ENCODE measurements at regions of chr13 and their contacts with region 1.

Region 1: DNA sequence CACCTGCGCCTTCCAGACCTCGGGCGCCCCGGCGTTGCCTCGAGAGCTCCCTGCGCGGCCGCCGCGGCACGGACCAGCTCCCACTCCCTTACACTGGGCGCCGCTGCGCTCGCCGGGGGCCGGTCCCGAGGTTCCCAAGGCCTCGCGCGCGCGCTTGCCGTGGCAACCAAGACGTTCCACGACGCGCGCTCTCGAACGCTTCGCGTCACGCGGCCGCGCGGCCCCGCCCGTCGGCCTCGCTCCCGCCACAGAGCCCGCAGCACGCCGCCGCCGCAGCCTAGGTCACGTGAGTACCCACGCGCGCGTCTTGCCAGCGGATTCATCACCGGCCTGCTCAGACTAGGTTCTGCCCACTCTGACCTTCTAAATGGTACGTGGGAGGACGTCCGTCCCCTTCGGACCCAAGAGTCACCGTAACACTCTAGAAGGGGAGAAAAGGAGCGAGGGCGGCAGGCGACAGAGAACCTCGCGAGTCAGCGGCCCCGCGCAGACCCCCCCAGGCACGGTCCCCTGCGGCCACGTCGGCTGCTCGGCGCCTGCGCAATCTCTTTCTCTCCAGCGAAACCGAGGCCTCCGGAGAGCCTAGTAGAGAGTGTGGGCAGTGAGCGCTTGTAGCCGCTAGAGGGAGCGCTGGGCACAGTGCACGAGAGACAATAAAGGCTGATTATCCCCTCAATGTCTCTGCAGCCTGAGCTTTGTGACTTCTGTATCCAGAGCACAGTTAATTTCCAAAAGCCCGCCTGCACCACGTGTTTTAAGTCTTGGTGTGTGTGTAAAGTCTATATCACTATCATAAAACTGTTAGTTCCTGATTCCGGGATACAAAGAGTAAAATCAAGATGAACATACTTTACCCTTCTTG is at the start of gene SPART:
- DNase-seq: peak; percentile 79 to 95 (median 90)
- ATAC-seq: peak; percentile 89
- H3K4me3 ChIP-seq: peak within 1 kb of the TSS; percentile 89
- H3K4me3 Mint-ChIP-seq: peak within 1 kb of the TSS; percentile 83 to 99 (median 96)
- H3K27ac ChIP-seq: peak within 1 kb of the TSS; percentile 81
- H3K27ac Mint-ChIP-seq: peak within 1 kb of the TSS; percentile 91 to 99 (median 97)
- H3K4me1 ChIP-seq: peaks cover 4 to 14% of the 10 kb centered on the region in 2 donors
- H3K4me1 Mint-ChIP-seq: peaks cover 24 to 42% (median 38%) of the 10 kb centered on the region in 7 donors
- H3K27me3 ChIP-seq: no peaks in the 10 kb centered on the region
- H3K27me3 Mint-ChIP-seq: peaks cover 0 to 5% (median 0%) of the 10 kb centered on the region in 5 donors
- total RNA-seq, gene SPART: 24.8 to 67.5 (median 26.9) TPM

Region 2: DNA sequence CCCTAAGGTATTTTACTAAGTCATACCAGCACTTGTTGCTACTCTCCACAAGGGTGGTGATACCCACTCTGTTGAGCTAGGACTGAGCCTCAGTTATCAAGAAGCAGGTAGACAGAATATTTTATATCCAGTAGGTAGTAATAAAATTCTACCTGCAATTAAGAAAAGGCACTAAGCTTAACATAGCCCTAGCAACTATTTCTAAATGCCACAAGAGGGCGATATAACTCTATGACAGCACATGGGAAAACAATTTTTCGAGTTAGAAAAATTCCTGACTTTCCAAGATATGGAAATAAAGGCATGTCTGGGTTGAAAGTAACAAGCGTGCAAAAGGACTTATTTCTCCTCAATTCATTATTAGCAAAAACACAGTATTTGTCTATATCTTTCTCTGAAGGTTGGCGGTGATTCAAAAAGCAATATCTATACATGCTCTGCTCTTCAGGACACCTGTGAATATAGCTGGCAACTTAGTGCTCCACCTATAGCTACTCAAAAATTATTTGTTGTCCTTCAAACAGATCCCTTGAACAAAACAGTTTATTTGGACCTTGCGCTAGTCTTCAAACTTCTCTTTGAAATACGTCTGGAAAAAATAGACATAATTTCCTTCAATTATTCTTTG is 63.5 kb before region 1 on chr13:
- CTCF ChIA-PET with region 1: interaction called, 4 read pairs
- POLR2A ChIA-PET with region 1: no interaction called
- intact Hi-C with region 1: loop called in 1 of 2 experiments (anchors 5 kb)
- DNase-seq: peak in 4 of 9 donors; percentile 4 to 18 (median 10)
- ATAC-seq: peak; percentile 52
- H3K4me3 ChIP-seq: no peak overlapping the region
- H3K4me3 Mint-ChIP-seq: no peak overlapping the region
- H3K27ac ChIP-seq: no peak overlapping the region
- H3K27ac Mint-ChIP-seq: no peak overlapping the region
- H3K4me1 ChIP-seq: no peaks in the 10 kb centered on the region
- H3K4me1 Mint-ChIP-seq: no peaks in the 10 kb centered on the region
- H3K27me3 ChIP-seq: peaks cover 0 to 5% of the 10 kb centered on the region in 2 donors
- H3K27me3 Mint-ChIP-seq: peaks cover 6 to 41% (median 32%) of the 10 kb centered on the region in 5 donors

Region 3: GRCh38 chr13:36332986-36333385 is 13.5 kb before region 1 on chr13:
- CTCF ChIA-PET with region 1: interaction called, 3 read pairs
- POLR2A ChIA-PET with region 1: interaction called, 3 read pairs
- intact Hi-C with region 1: loop called in 1 of 2 experiments (anchors 1 kb)
- DNase-seq: no peak
- ATAC-seq: no peak
- H3K4me3 ChIP-seq: no peak overlapping the region
- H3K4me3 Mint-ChIP-seq: no peak overlapping the region
- H3K27ac ChIP-seq: no peak overlapping the region
- H3K27ac Mint-ChIP-seq: no peak overlapping the region
- H3K4me1 ChIP-seq: no peaks in the 10 kb centered on the region
- H3K4me1 Mint-ChIP-seq: peaks cover 23 to 57% (median 40%) of the 10 kb centered on the region in 7 donors
- H3K27me3 ChIP-seq: no peaks in the 10 kb centered on the region
- H3K27me3 Mint-ChIP-seq: no peaks in the 10 kb centered on the region

Region 4: GRCh38 chr13:36420437-36420891 is 74.0 kb after region 1 on chr13:
- CTCF ChIA-PET with region 1: no interaction called
- POLR2A ChIA-PET with region 1: no interaction called
- intact Hi-C with region 1: loop called (anchors 1 kb)
- DNase-seq: peak in 8 of 9 donors; percentile 15 to 69 (median 52)
- ATAC-seq: peak; percentile 85
- H3K4me3 ChIP-seq: no peak overlapping the region
- H3K4me3 Mint-ChIP-seq: peak overlapping the region in 1 of 10 donors; percentile 51
- H3K27ac ChIP-seq: no peak overlapping the region
- H3K27ac Mint-ChIP-seq: peak overlapping the region in 1 of 9 donors; percentile 54
- H3K4me1 ChIP-seq: no peaks in the 10 kb centered on the region
- H3K4me1 Mint-ChIP-seq: peaks cover 0 to 41% (median 0%) of the 10 kb centered on the region in 7 donors
- H3K27me3 ChIP-seq: no peaks in the 10 kb centered on the region
- H3K27me3 Mint-ChIP-seq: peaks cover 16 to 71% (median 61%) of the 10 kb centered on the region in 5 donors

Region 5: DNA sequence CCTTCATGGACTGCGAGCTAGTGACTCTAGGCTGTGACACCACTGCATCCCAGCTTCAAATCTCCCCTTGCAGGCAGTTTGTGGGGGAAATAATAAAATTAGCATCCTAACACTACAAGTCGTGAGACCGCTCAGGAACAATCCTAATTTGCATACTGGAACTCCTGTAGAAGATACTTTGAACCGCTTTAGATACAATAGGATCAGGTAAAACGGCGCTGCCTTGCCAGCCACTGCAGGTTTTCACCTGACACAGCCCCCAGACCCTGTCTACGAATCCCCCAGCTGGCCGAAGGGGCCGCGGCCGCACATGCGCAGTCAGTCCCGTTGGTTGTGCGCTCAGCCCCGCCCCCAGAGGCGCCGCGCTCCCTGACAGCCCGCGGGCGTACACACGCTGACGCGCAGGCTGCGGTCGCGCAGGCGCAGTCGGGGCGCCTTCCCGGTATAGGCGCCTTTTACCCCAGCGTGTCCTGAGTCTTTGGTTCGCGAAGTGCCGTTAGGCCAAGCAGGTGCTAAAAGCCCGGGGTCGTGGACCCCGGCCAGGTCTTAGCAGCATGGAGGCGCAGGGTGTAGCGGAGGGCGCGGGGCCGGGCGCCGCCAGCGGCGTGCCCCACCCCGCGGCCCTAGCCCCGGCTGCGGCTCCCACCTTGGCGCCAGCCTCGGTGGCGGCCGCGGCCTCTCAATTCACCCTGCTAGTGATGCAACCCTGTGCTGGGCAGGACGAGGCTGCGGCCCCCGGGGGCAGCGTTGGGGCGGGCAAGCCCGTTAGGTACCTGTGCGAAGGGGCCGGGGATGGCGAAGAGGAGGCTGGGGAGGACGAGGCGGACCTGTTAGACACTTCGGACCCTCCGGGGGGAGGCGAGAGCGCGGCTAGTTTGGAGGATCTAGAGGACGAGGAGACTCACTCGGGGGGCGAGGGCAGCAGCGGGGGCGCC is 472.6 kb after region 1 on chr13 and contains the start of gene RFXAP:
- CTCF ChIA-PET with region 1: no interaction called
- POLR2A ChIA-PET with region 1: no interaction called
- intact Hi-C with region 1: loop called (anchors 1 kb)
- DNase-seq: peak; percentile 84 to 95 (median 92)
- ATAC-seq: peak; percentile 96
- H3K4me3 ChIP-seq: peak within 1 kb of the TSS; percentile 86
- H3K4me3 Mint-ChIP-seq: peak within 1 kb of the TSS; percentile 90 to 98 (median 92)
- H3K27ac ChIP-seq: peak within 1 kb of the TSS; percentile 93
- H3K27ac Mint-ChIP-seq: peak within 1 kb of the TSS; percentile 70 to 96 (median 94)
- H3K4me1 ChIP-seq: peaks cover 11 to 12% of the 10 kb centered on the region in 2 donors
- H3K4me1 Mint-ChIP-seq: peaks cover 29 to 60% (median 54%) of the 10 kb centered on the region in 7 donors
- H3K27me3 ChIP-seq: no peaks in the 10 kb centered on the region
- H3K27me3 Mint-ChIP-seq: peaks cover 0 to 17% (median 6%) of the 10 kb centered on the region in 5 donors
- total RNA-seq, gene RFXAP: 4.9 to 12.7 (median 12.0) TPM

Region 6: DNA sequence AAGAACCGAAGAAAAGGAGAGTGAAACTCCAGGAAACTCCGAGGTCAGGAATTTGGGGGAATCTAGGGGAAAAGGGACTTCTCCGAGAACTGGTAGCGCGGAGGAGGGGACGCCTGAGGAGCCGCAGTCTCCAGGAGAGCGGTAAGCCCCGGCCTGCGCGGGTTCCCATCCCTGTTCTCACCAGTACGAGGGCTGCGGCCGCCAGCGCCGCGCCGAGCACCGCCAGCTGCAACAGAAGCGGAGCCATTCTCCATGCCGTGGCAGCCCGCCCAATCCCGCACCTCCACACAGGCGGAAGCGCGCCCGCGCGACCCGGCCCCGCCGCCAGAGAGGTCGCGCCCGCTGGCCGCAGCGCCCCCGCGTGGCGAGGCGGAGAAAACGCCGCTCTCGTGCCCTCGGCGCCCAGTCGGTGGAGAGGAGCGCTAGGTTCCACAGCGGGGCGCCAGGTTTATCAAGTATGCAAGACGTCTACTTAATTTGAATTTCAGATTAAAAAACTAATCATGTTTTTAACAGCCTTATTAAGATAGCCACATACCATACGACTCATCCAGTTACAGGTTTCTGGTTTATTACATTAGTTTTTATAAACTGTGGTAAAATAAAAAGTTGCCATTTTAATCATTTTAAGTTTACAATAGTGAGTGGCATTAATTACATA is 652.7 kb after region 1 on chr13 and contains the start of gene ALG5:
- CTCF ChIA-PET with region 1: no interaction called
- POLR2A ChIA-PET with region 1: interaction called, 8 read pairs
- intact Hi-C with region 1: loop called (anchors 1 kb)
- DNase-seq: peak; percentile 91 to 99 (median 96)
- ATAC-seq: peak; percentile 85
- H3K4me3 ChIP-seq: peak within 1 kb of the TSS; percentile 77
- H3K4me3 Mint-ChIP-seq: peak within 1 kb of the TSS; percentile 90 to 100 (median 98)
- H3K27ac ChIP-seq: peak within 1 kb of the TSS; percentile 89
- H3K27ac Mint-ChIP-seq: peak within 1 kb of the TSS; percentile 98 to 100 (median 100)
- H3K4me1 ChIP-seq: peaks cover 12 to 21% of the 10 kb centered on the region in 2 donors
- H3K4me1 Mint-ChIP-seq: peaks cover 23 to 54% (median 46%) of the 10 kb centered on the region in 7 donors
- H3K27me3 ChIP-seq: no peaks in the 10 kb centered on the region
- H3K27me3 Mint-ChIP-seq: peaks cover 0 to 7% (median 0%) of the 10 kb centered on the region in 5 donors
- total RNA-seq, gene ALG5: 12.1 to 39.3 (median 22.8) TPM

Region 7: GRCh38 chr13:37068962-37069361 is 722.5 kb after region 1 on chr13:
- CTCF ChIA-PET with region 1: no interaction called
- POLR2A ChIA-PET with region 1: no interaction called
- intact Hi-C with region 1: loop called in 1 of 2 experiments (anchors 10 kb)
- DNase-seq: no peak
- ATAC-seq: no peak
- H3K4me3 ChIP-seq: no peak overlapping the region
- H3K4me3 Mint-ChIP-seq: no peak overlapping the region
- H3K27ac ChIP-seq: no peak overlapping the region
- H3K27ac Mint-ChIP-seq: no peak overlapping the region
- H3K4me1 ChIP-seq: no peaks in the 10 kb centered on the region
- H3K4me1 Mint-ChIP-seq: no peaks in the 10 kb centered on the region
- H3K27me3 ChIP-seq: no peaks in the 10 kb centered on the region
- H3K27me3 Mint-ChIP-seq: peaks cover 0 to 23% (median 7%) of the 10 kb centered on the region in 5 donors

Measured in naive thymus-derived CD4-positive, alpha-beta T cell (primary cell).